Kidney (tissue), 22 donors: ENCODE measurements at regions of chr1 and their contacts with region 1.

Region 1: GRCh38 chr1:246005067-246005466 is 502.0 kb downstream of the SMYD3 start:
- DNase-seq: no peak
- H3K4me3 ChIP-seq: no peak overlapping the region
- H3K27ac ChIP-seq: no peak overlapping the region
- H3K4me1 ChIP-seq: no peaks in the 10 kb centered on the region
- H3K27me3 ChIP-seq: no peaks in the 10 kb centered on the region
- CTCF ChIP-seq: no peak

Region 2: DNA sequence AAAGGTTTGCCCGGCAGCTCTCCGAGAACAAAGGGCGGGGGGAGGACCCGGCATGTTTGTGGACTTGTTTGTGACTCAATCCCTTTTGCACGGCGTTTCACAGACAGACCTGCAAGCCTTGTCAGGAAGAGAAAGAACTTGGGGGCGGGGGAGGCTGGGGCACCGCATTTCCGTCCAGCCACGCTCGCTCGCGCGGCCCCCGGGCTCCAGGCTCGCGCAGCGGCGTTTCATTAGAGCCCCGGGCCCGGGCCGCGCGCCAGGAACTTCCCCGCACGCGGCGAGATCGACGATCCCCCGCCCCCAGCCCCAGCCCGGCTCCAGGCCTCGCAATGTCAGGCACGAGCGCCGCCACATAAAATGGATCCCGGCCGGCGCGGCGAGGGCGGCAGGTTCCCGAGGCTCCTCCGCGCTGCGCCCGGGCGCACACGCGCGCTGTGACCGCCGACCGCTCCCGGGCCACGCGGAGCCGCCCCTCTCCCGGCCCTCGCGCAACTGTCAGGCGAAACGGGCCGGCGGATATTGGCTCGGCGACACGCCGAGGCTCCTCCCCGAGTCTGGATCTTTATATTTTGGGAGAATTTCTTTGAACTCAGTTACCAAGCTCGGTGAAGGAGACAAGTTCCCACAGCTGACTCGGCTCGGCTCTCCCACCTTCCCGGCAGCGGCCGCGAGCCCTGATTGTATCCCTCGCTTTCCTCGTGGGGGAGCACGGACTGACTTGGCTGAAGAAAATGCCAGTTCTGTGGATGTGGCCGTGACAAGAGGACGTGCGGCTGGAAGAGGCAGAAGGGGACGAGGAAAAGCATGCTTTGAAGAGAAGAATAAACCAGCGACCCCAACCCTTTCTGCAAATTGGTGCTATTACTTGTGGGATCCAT is 850.4 kb before region 1 on chr1 and contains the start of gene KIF26B:
- intact Hi-C with region 1: loop called (anchors 2 kb)
- DNase-seq: peak; percentile 71 to 83 (median 82)
- H3K4me3 ChIP-seq: peak within 1 kb of the TSS; percentile 35 to 73 (median 71)
- H3K27ac ChIP-seq: peak within 1 kb of the TSS in 1 of 2 donors; percentile 28
- H3K4me1 ChIP-seq: peaks cover 0 to 10% (median 9%) of the 10 kb centered on the region in 3 donors
- H3K27me3 ChIP-seq: no peaks in the 10 kb centered on the region
- CTCF ChIP-seq: no peak
- total RNA-seq, gene KIF26B: 10.7 TPM